ENCODE measurements at regions of chr16 and their contacts with region 1.

Region 1: GRCh38 chr16:88639231-88640038 is 1.1 kb downstream of the IL17C start:
- DNase-seq: peak in 2 of 4 experiments; percentile 60 to 69
- ATAC-seq: peak; percentile 44
- H3K4me3 ChIP-seq: no peak overlapping the region
- H3K27ac ChIP-seq: no peak overlapping the region
- H3K4me1 ChIP-seq: peaks cover 13 to 79% of the 10 kb centered on the region in 2 experiments
- H3K27me3 ChIP-seq: peaks cover 13 to 18% of the 10 kb centered on the region in 2 experiments; a peak in 3 of 5 replicates
- CTCF ChIP-seq: no peak
- EP300 ChIP-seq: no peak
- POLR2A ChIP-seq: no peak
- RAD21 ChIP-seq: no peak

Region 2: GRCh38 chr16:88274847-88275246 is 364.6 kb before region 1 on chr16:
- CTCF ChIA-PET with region 1: no interaction called
- POLR2A ChIA-PET with region 1: no interaction called
- in situ Hi-C with region 1: no loop called
- intact Hi-C with region 1: no loop called
- DNase-seq: no peak
- ATAC-seq: no peak
- H3K4me3 ChIP-seq: no peak overlapping the region
- H3K27ac ChIP-seq: no peak overlapping the region
- H3K4me1 ChIP-seq: no peaks in the 10 kb centered on the region
- H3K27me3 ChIP-seq: peaks cover 0 to 11% of the 10 kb centered on the region in 2 experiments; a peak in 2 of 5 replicates
- CTCF ChIP-seq: no peak
- EP300 ChIP-seq: no peak
- POLR2A ChIP-seq: no peak
- RAD21 ChIP-seq: no peak

Region 3: GRCh38 chr16:88558457-88559442 is 80.7 kb before region 1 on chr16:
- CTCF ChIA-PET with region 1: no interaction called
- POLR2A ChIA-PET with region 1: no interaction called
- in situ Hi-C with region 1: no loop called
- intact Hi-C with region 1: no loop called
- DNase-seq: peak; percentile 78 to 92 (median 81)
- ATAC-seq: peak; percentile 93
- H3K4me3 ChIP-seq: no peak overlapping the region
- H3K27ac ChIP-seq: no peak overlapping the region
- H3K4me1 ChIP-seq: peaks cover 8 to 48% of the 10 kb centered on the region in 2 experiments; a peak in 4 of 5 replicates
- H3K27me3 ChIP-seq: peaks cover 11 to 27% of the 10 kb centered on the region in 2 experiments; a peak in 3 of 5 replicates
- CTCF ChIP-seq: peak; percentile 76 to 87 (median 77)
- EP300 ChIP-seq: no peak
- POLR2A ChIP-seq: no peak
- RAD21 ChIP-seq: peak in 1 of 2 experiments; percentile 59; a peak in 2 of 4 replicates

Region 4: DNA sequence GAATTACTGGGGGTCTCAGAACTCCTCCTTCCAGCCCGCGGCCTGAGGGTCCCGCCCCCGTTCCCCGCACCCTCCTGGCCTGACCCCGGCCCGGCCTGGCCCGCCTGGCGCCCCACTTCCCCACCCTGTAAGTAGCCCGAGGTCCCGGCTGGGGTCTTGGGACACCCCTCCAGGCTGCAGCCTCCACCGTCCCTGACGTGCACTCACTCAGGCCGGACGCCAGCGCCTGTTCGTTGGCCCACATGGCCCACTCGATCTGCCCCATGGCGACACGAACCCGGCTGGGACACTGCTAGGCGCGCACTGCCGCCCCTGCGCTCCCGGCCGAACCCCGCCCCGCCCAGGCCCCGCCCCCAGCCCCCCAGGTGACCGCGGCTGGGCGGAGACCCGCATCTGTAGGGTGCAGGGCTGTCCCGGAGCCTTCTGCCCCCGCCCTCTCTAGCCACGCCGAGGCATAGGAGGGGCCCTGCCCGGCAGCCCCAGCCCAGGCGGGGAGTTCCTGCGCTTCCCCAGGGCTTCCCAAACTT is 11.4 kb after region 1 on chr16 and contains the start of gene CYBA:
- CTCF ChIA-PET with region 1: no interaction called
- POLR2A ChIA-PET with region 1: interaction called, 13 read pairs
- in situ Hi-C with region 1: no loop called
- intact Hi-C with region 1: no loop called
- DNase-seq: peak; percentile 93 to 97 (median 96)
- ATAC-seq: peak; percentile 95
- H3K4me3 ChIP-seq: peak within 1 kb of the TSS; percentile 84
- H3K27ac ChIP-seq: peak within 1 kb of the TSS; percentile 95
- H3K4me1 ChIP-seq: peaks cover 11 to 92% of the 10 kb centered on the region in 2 experiments; a peak in 4 of 5 replicates
- H3K27me3 ChIP-seq: no peaks in the 10 kb centered on the region
- CTCF ChIP-seq: no peak
- EP300 ChIP-seq: no peak
- POLR2A ChIP-seq: peak; percentile 89
- RAD21 ChIP-seq: no peak
- polyA plus RNA-seq, gene CYBA: 0.34 to 0.45 TPM

Region 5: GRCh38 chr16:88686439-88687253 is 47.2 kb after region 1 on chr16 and contains the start of gene SNAI3:
- CTCF ChIA-PET with region 1: no interaction called
- POLR2A ChIA-PET with region 1: no interaction called
- in situ Hi-C with region 1: no loop called
- intact Hi-C with region 1: no loop called
- DNase-seq: peak; percentile 97 to 98 (median 98)
- ATAC-seq: peak; percentile 94
- H3K4me3 ChIP-seq: peak within 1 kb of the TSS; percentile 60
- H3K27ac ChIP-seq: peak within 1 kb of the TSS; percentile 44; the same call in 2 of the 3 replicates
- H3K4me1 ChIP-seq: peaks cover 38 to 75% of the 10 kb centered on the region in 2 experiments
- H3K27me3 ChIP-seq: no peaks in the 10 kb centered on the region
- CTCF ChIP-seq: no peak
- EP300 ChIP-seq: no peak
- POLR2A ChIP-seq: peak; percentile 74
- RAD21 ChIP-seq: no peak
- polyA plus RNA-seq, gene SNAI3: 0.04 TPM in 1 of 2 experiments, not detected in the other